Adrenal gland (tissue), 19 donors: ENCODE measurements at regions of chr15 and their contacts with region 1.

Region 1: GRCh38 chr15:31435261-31435911 is 108.8 kb downstream of the KLF13 start:
- DNase-seq: peak; percentile 56 to 92 (median 73)
- H3K4me3 ChIP-seq: no peak overlapping the region
- H3K27ac ChIP-seq: peak overlapping the region in 4 of 5 donors; percentile 2 to 83 (median 42)
- H3K4me1 ChIP-seq: peaks cover 0 to 15% of the 10 kb centered on the region in 2 donors
- H3K27me3 ChIP-seq: no peaks in the 10 kb centered on the region
- CTCF ChIP-seq: peak; percentile 32 to 87 (median 68)
- POLR2A ChIP-seq: no peak

Region 2: DNA sequence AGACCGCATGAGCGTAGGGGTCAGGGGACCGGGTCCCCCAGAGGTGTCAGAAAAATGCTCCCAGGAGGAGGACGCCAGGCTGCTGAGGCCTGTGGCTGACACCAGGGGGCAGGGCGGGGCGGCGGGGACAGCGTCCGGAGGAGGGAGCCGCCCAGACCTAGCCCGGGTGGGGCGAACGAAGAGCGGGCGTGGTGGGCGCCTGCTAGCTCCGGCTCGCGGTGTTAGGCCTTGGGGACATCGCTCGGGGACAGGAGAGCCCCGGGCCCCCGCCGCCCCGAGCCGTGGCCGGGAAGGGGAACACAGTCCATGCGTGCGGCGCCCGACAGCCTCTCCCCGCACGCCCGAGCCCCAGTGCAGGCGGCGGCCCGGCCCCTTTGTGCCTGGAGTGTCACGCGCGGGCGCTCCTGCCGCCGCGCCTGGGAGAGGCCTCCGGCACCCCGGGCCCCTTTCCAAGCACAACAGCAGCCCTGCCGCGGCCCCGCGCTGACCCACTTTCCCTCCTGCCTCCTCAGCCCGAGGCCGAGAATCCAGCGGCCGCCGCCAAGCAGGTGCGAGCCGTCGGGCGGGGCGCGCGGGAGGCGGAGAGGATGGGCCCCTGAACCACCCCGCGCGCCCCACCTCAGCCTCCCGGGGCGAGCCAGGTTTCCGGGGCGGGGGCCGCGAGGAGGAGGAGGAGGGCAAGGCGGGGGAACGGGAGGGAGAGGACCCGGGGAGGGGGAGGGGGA is 219.7 kb before region 1 on chr15:
- intact Hi-C with region 1: loop called in 1 of 2 experiments (anchors 5 kb)
- DNase-seq: peak; percentile 71 to 83 (median 77)
- H3K4me3 ChIP-seq: peak overlapping the region in 2 of 4 donors; percentile 20 to 71
- H3K27ac ChIP-seq: peak overlapping the region; percentile 26 to 90 (median 82)
- H3K4me1 ChIP-seq: peaks cover 0 to 15% of the 10 kb centered on the region in 2 donors
- H3K27me3 ChIP-seq: no peaks in the 10 kb centered on the region
- CTCF ChIP-seq: peak; percentile 68 to 92 (median 82)
- POLR2A ChIP-seq: peak in 1 of 2 donors; percentile 59

Region 3: GRCh38 chr15:31280046-31280830 is 155.1 kb before region 1 on chr15:
- intact Hi-C with region 1: no loop called
- DNase-seq: peak in 4 of 7 donors; percentile 5 to 53 (median 12)
- H3K4me3 ChIP-seq: no peak overlapping the region
- H3K27ac ChIP-seq: peak overlapping the region in 1 of 5 donors; percentile 49
- H3K4me1 ChIP-seq: no peaks in the 10 kb centered on the region
- H3K27me3 ChIP-seq: no peaks in the 10 kb centered on the region
- CTCF ChIP-seq: no peak
- POLR2A ChIP-seq: no peak

Region 4: GRCh38 chr15:31365655-31366127 is 69.7 kb before region 1 on chr15:
- intact Hi-C with region 1: loop called in 1 of 2 experiments (anchors 10 kb)
- DNase-seq: peak; percentile 87 to 98 (median 94)
- H3K4me3 ChIP-seq: peak overlapping the region in 1 of 4 donors; percentile 18
- H3K27ac ChIP-seq: peak overlapping the region in 4 of 5 donors; percentile 69 to 95 (median 88)
- H3K4me1 ChIP-seq: peaks cover 29 to 81% of the 10 kb centered on the region in 2 donors
- H3K27me3 ChIP-seq: no peaks in the 10 kb centered on the region
- CTCF ChIP-seq: peak in 4 of 6 experiments; percentile 4 to 54 (median 34)
- POLR2A ChIP-seq: peak; percentile 40 to 47

Region 5: DNA sequence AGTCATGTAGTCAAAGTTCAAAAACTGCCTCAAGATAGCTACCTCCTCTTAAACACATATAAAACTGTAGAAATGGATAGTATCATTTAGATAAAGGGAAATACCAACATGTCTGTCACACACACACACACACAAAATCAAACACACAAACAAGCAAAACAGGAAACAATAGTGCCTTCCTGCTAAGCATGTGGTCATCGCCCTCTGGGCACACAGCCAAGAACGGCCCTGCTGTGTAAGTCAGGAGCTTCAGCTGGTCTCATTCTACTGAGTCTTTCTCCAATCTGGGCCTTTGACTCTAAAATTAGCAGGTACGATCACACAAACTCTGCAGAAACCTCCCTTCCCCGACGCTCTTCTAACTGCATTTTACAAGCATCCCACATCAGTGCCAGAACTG is 322.7 kb after region 1 on chr15:
- intact Hi-C with region 1: no loop called
- DNase-seq: peak; percentile 51 to 82 (median 75)
- H3K4me3 ChIP-seq: no peak overlapping the region
- H3K27ac ChIP-seq: no peak overlapping the region
- H3K4me1 ChIP-seq: no peaks in the 10 kb centered on the region
- H3K27me3 ChIP-seq: no peaks in the 10 kb centered on the region
- CTCF ChIP-seq: no peak
- POLR2A ChIP-seq: no peak